ENCODE measurements at regions of chr1 and their contacts with region 1.

Region 1: GRCh38 chr1:155884031-155884960 is 24.9 kb downstream of the SYT11 start:
- DNase-seq: peak; percentile 70
- H3K4me3 ChIP-seq: peak overlapping the region; percentile 53
- H3K27ac ChIP-seq: peak overlapping the region; percentile 96
- H3K4me1 ChIP-seq: peaks cover 83% of the 10 kb centered on the region
- CTCF ChIP-seq: no peak

Region 2: GRCh38 chr1:155729031-155729898 is 155.0 kb before region 1 on chr1:
- CTCF ChIA-PET with region 1: no interaction called
- POLR2A ChIA-PET with region 1: no interaction called
- intact Hi-C with region 1: no loop called
- DNase-seq: peak; percentile 47
- H3K4me3 ChIP-seq: no peak overlapping the region
- H3K27ac ChIP-seq: no peak overlapping the region
- H3K4me1 ChIP-seq: no peaks in the 10 kb centered on the region
- CTCF ChIP-seq: peak; percentile 83

Region 3: DNA sequence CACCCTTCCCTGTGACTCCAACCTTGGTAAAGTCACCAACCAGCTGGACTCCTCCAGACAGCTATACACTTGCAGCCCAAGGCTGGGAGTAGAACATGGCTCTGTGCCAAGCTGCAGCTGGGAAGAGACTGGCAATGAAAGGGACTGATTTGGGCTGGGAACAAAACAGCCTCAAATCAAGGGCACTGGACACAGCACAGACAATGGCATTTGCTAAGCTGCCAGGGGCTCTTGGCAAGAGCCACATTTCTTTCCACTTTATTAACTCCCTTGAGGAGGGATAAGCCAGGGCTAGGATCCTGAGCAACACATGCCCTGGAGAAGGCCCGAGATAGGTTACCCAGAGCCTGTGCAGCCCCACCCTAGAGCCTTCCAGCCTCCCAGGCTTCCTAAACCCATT is 12.9 kb before region 1 on chr1:
- CTCF ChIA-PET with region 1: interaction called, 7 read pairs
- POLR2A ChIA-PET with region 1: interaction called, 39 read pairs
- intact Hi-C with region 1: no loop called
- DNase-seq: no peak
- H3K4me3 ChIP-seq: no peak overlapping the region
- H3K27ac ChIP-seq: no peak overlapping the region
- H3K4me1 ChIP-seq: peaks cover 24% of the 10 kb centered on the region
- CTCF ChIP-seq: no peak

Region 4: DNA sequence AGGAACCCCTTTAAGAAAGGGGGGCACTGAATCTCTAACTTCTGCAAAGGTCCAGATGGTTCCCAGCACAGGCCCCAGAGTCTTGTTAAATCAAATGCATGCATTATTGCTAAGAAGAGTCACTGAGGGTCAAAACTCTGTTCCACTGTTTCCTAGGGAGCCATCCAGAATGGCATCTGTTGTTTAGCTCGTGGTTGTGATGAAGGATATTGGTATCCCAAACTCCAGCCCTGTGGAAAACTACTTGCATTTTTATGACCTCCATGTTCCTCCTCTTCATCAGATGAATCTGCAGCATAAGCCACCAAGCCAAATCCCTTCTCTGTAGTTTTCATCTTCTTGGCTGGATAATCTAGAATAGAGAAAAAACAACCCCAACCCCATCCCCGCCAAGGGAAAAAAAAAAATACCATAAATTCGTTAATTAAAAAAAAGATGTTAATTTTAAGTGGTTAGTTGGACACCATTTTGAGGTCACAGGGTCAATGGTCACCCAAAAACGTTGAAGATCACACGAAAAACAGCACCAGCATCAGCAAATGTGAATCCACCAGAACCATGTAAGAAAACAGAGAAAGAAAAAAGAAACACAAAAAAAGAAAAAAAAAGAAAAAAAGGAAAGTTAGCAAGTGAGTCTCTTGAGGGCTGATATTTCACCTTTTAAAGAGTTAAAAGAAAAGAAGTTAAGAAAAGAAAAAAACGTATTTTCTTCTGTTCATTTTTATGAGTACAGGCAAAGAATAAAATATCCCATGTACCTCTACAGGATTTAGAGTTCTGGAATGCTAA is 29.9 kb after region 1 on chr1:
- CTCF ChIA-PET with region 1: no interaction called
- POLR2A ChIA-PET with region 1: no interaction called
- intact Hi-C with region 1: no loop called
- DNase-seq: no peak
- H3K4me3 ChIP-seq: no peak overlapping the region
- H3K27ac ChIP-seq: peak overlapping the region; percentile 17
- H3K4me1 ChIP-seq: peaks cover 23% of the 10 kb centered on the region
- CTCF ChIP-seq: no peak